ENCODE measurements at regions of chr5 and their contacts with region 1.

Region 1: DNA sequence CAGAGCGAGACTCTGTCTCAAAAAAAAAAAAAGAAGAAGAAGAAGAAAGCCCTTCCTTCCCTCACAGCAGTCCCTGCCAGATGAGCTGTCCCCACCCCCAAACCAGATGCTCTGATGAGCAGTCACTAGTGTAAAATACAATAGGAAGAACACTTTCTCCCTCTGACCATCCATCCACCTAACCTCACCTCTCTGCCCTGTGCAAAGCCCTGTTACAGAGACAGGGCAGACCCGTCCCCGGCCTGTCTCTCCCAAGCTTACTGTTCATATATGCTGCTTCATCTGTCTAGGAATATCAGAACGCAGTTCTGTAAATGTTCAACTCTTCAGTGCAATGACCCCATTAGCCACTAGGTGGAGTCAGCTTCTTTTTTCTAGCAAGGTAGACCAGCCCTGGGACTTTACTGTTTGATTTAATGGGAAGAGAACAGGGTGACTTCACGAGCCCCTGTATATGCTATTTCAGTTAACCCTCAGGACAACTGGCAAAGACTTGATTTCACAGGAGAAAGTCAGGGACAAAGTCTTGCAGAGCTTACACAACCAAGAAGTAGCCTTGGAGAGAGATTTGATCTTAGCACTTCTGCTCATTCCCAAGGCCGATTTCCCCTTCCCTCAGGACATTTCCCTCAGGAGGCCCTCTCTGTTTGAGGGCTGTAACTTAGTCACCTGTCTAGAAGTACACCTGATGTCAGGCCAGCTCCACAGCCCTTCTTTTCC is 14.9 kb upstream of the FGFR4 start:
- DNase-seq: peak; percentile 80
- ATAC-seq: peak; percentile 87
- H3K4me3 Mint-ChIP-seq: no peak overlapping the region
- H3K27ac Mint-ChIP-seq: no peak overlapping the region
- H3K4me1 Mint-ChIP-seq: peaks cover 4% of the 10 kb centered on the region
- H3K27me3 Mint-ChIP-seq: no peaks in the 10 kb centered on the region

Region 2: DNA sequence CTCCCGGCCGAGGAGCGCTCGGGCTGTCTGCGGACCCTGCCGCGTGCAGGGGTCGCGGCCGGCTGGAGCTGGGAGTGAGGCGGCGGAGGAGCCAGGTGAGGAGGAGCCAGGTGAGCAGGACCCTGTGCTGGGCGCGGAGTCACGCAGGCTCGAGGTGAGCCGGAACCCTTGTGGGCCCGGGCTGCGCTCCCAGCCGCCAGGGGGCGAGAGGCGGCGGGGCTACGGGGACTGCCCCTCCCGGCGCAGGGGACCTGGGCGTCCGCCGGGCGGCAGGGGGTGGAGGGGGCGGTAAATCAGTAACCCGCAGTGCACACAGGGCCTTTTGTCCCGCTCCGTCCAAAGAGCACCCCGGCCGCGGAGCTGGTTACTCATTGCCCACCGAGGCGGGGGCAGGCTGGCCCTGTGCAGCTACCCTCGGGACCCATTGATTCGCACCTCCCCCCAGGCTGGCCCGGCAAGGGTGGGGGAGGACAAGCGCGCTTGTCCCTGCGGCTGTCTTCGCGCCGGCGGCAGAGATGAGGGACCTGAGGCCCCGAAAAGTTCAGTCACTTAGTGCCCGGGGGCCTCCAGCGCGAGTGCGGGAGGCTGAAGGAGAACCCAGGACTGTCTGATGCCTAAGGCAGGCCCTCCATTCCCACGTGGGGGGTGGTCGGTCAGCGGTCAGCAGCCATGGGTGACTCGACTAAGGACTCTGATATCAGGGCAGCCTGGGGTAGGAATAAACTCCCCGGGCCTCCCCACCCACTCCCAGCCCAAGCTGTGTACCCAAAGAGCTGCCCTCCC is 15.3 kb after region 1 on chr5:
- CTCF ChIA-PET with region 1: interaction called, 13 read pairs
- POLR2A ChIA-PET with region 1: interaction called, 3 read pairs
- intact Hi-C with region 1: no loop called
- DNase-seq: peak; percentile 78
- ATAC-seq: peak; percentile 86
- H3K4me3 Mint-ChIP-seq: peak overlapping the region; percentile 13
- H3K27ac Mint-ChIP-seq: no peak overlapping the region
- H3K4me1 Mint-ChIP-seq: peaks cover 2% of the 10 kb centered on the region
- H3K27me3 Mint-ChIP-seq: peaks cover 18% of the 10 kb centered on the region

Measured in activated CD4-positive, alpha-beta T cell treated with anti-CD3 and anti-CD28 coated beads for 36 hours (primary cell).